Natural killer cell (primary cell): ENCODE measurements at regions of chr19 and their contacts with region 1.

Region 1: GRCh38 chr19:51948975-51949374 is 21.7 kb downstream of the ZNF613 start:
- DNase-seq: no peak
- ATAC-seq: no peak
- H3K4me3 ChIP-seq: no peak overlapping the region
- H3K4me3 Mint-ChIP-seq: peak overlapping the region; percentile 9
- H3K27ac ChIP-seq: no peak overlapping the region
- H3K27ac Mint-ChIP-seq: no peak overlapping the region
- H3K4me1 ChIP-seq: no peaks in the 10 kb centered on the region
- H3K4me1 Mint-ChIP-seq: no peaks in the 10 kb centered on the region
- H3K27me3 ChIP-seq: no peaks in the 10 kb centered on the region
- H3K27me3 Mint-ChIP-seq: no peaks in the 10 kb centered on the region
- CTCF ChIP-seq: no peak

Region 2: DNA sequence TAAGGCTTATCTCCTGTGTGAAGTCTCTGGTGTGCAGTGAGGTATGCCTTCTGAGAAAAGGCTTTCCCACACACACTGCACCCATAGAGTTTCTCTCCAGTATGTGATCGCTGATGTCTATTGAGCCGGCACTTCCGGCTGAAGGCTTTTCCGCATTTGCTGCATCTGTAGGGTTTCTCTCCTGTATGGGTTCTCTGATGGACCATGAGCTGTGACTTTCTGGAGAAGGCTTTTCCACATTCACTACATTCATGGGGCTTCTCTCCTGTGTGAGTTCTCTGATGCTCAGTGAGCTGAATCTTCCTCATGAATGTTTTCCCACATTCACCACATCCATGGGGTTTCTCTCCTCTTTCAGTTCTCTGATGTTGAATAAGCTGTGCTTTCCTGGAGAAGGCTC is 75.9 kb before region 1 on chr19:
- intact Hi-C with region 1: no loop called
- DNase-seq: no peak
- ATAC-seq: no peak
- H3K4me3 ChIP-seq: no peak overlapping the region
- H3K4me3 Mint-ChIP-seq: no peak overlapping the region
- H3K27ac ChIP-seq: no peak overlapping the region
- H3K27ac Mint-ChIP-seq: no peak overlapping the region
- H3K4me1 ChIP-seq: no peaks in the 10 kb centered on the region
- H3K4me1 Mint-ChIP-seq: no peaks in the 10 kb centered on the region
- H3K27me3 ChIP-seq: no peaks in the 10 kb centered on the region
- H3K27me3 Mint-ChIP-seq: no peaks in the 10 kb centered on the region
- CTCF ChIP-seq: no peak

Region 3: GRCh38 chr19:51887522-51888498 is 61.2 kb before region 1 on chr19 and contains the start of gene ZNF577:
- intact Hi-C with region 1: loop called (anchors 10 kb)
- DNase-seq: peak; percentile 73 to 74
- ATAC-seq: peak; percentile 85 to 97 (median 96)
- H3K4me3 ChIP-seq: peak within 1 kb of the TSS; percentile 54
- H3K4me3 Mint-ChIP-seq: peak within 1 kb of the TSS; percentile 100
- H3K27ac ChIP-seq: peak within 1 kb of the TSS; percentile 50
- H3K27ac Mint-ChIP-seq: peak within 1 kb of the TSS; percentile 96 to 97
- H3K4me1 ChIP-seq: peaks cover 3% of the 10 kb centered on the region
- H3K4me1 Mint-ChIP-seq: peaks cover 13 to 19% of the 10 kb centered on the region in 2 donors
- H3K27me3 ChIP-seq: no peaks in the 10 kb centered on the region
- H3K27me3 Mint-ChIP-seq: no peaks in the 10 kb centered on the region
- CTCF ChIP-seq: no peak
- total RNA-seq, gene ZNF577: 8.5 to 15.6 (median 12.4) TPM